ENCODE measurements at regions of chr6 and their contacts with region 1.

Region 1: DNA sequence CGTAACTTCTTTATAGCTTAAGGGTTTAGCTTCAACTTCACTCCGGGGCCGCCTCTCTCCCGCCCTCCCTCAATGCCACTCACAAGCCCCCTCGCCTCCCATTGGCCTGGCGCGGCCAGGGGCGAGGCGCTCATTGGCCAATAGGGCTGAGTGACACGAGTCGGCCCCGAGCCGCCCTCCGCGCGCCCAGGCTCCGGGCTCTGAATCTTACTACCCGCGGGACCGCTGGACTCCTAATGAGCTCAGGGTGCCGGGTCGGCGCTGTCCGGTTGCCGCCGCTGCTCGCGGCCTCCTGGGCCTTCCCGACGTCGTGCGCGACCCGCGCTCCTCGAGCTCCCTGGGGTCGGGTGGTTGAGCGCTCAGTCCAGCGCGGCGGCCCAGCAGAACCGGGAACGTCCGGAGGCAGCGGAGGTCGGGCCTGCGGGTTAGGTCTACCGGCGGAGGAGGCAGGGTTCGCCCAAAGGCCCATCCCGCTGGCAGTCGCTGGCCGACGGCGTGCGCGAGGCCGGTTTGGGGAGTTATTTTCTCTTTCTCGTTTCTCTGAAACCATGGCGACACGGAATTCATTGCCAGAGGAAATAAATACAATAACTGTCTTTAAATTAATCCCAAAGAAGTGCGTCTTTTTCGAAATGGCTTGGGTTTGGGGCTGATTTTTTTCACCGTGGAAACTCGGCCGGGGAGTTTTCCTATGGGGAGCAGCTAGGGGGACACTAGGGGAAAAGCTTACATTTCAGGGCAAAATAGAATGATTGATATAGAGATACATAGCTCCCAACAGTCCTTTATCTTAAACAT is at the start of gene SIM1:
- DNase-seq: peak; percentile 91
- H3K4me3 ChIP-seq: peak within 1 kb of the TSS; percentile 25 to 51 (median 44)
- H3K27ac ChIP-seq: no peak within 1 kb of the TSS
- H3K4me1 ChIP-seq: peaks cover 21% of the 10 kb centered on the region
- H3K27me3 ChIP-seq: peaks cover 85 to 100% of the 10 kb centered on the region in 2 experiments
- CTCF ChIP-seq: no peak
- POLR2A ChIP-seq: no peak
- total RNA-seq, gene SIM1: 0.29 and 0.39 TPM in 2 replicates

Region 2: GRCh38 chr6:99603421-99604165 is 861.5 kb before region 1 on chr6:
- CTCF ChIA-PET with region 1: no interaction called
- POLR2A ChIA-PET with region 1: no interaction called
- dilution Hi-C with region 1: no loop called
- intact Hi-C with region 1: loop called (anchors 10 kb)
- DNase-seq: peak; percentile 38
- H3K4me3 ChIP-seq: no peak overlapping the region
- H3K27ac ChIP-seq: no peak overlapping the region
- H3K4me1 ChIP-seq: no peaks in the 10 kb centered on the region
- H3K27me3 ChIP-seq: peaks cover 79 to 100% of the 10 kb centered on the region in 2 experiments
- CTCF ChIP-seq: no peak
- POLR2A ChIP-seq: no peak

Region 3: DNA sequence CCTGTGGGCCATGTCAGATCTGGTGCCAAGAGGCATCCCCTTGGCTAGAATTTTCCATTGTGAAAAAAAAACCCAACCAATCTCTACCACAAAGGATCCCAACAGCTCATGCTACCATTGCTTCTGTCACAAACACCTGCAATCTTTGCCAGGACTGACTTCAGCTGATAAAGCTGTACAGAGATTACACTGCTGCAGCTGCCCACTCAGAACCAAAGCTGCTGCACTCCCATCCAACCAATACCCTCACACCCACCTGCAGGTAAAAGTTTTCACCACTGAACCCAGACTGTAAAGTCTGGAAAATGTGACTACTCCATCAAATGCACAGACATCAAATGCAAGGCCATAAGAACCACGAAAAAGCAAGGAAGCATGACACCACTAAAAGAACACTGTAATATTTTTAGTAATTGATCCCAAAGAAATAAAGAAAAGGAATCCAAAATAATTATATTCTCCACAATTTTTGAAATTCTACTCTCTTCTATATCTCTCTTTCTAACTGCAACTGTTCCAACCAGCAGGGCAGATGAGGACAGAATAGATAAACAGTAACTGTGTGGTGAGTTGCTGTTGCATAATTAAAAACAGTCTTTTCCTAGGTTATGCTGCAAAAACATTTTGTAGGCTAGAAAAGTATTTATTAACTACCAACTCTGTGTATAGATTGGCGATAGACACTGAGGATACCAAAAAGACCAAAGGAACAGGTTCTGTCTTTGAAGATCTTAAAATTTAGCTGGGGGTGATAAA is 343.1 kb before region 1 on chr6:
- CTCF ChIA-PET with region 1: interaction called, 59 read pairs
- POLR2A ChIA-PET with region 1: no interaction called
- dilution Hi-C with region 1: loop called (anchors 25 kb)
- intact Hi-C with region 1: loop called (anchors 5 kb)
- DNase-seq: no peak
- H3K4me3 ChIP-seq: no peak overlapping the region
- H3K27ac ChIP-seq: no peak overlapping the region
- H3K4me1 ChIP-seq: no peaks in the 10 kb centered on the region
- H3K27me3 ChIP-seq: no peaks in the 10 kb centered on the region
- CTCF ChIP-seq: no peak
- POLR2A ChIP-seq: no peak

Region 4: GRCh38 chr6:100228831-100229641 is 236.1 kb before region 1 on chr6:
- CTCF ChIA-PET with region 1: interaction called, 13 read pairs
- POLR2A ChIA-PET with region 1: no interaction called
- dilution Hi-C with region 1: no loop called
- intact Hi-C with region 1: loop called (anchors 2 kb)
- DNase-seq: peak; percentile 86
- H3K4me3 ChIP-seq: peak overlapping the region; percentile 10 to 65 (median 28)
- H3K27ac ChIP-seq: peak overlapping the region; percentile 81
- H3K4me1 ChIP-seq: peaks cover 35% of the 10 kb centered on the region
- H3K27me3 ChIP-seq: no peaks in the 10 kb centered on the region
- CTCF ChIP-seq: no peak
- POLR2A ChIP-seq: peak; percentile 70

Region 5: GRCh38 chr6:100269189-100269588 is 195.9 kb before region 1 on chr6:
- CTCF ChIA-PET with region 1: interaction called, 11 read pairs
- POLR2A ChIA-PET with region 1: no interaction called
- dilution Hi-C with region 1: no loop called
- intact Hi-C with region 1: no loop called
- DNase-seq: peak; percentile 81
- H3K4me3 ChIP-seq: no peak overlapping the region
- H3K27ac ChIP-seq: peak overlapping the region; percentile 64
- H3K4me1 ChIP-seq: peaks cover 31% of the 10 kb centered on the region
- H3K27me3 ChIP-seq: no peaks in the 10 kb centered on the region
- CTCF ChIP-seq: no peak
- POLR2A ChIP-seq: peak; percentile 17

Region 6: DNA sequence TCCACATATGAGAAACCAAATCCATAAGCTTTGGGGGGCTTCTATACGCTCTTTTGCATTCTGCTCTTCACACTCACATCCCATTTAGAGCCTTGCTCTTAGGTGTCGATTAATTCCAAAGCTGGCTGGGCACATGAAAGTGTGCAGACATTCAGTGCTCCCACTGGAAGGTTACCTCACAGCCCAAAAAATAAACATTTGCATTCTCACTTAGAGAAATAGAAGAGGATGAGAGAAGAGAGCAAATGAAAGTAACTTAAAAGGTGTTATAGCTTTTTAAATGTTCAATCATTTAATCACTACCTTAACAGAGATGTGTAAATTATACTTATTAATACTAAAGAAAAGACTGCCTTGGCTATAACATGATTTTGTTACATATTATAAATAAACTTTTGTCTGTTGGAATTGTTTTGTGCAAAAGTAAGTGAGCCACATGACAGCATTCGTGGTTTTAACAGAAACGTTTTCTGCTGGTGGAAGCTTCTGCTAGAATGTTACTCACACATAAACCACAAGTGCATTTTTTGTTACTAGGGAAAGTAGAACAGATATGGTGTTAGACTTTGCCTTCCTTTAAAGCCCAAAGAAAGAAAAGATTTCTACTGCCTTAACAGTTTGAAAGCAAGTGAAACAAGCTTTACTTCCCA is 117.1 kb before region 1 on chr6:
- CTCF ChIA-PET with region 1: interaction called, 5 read pairs
- POLR2A ChIA-PET with region 1: no interaction called
- dilution Hi-C with region 1: no loop called
- intact Hi-C with region 1: loop called (anchors 5 kb)
- DNase-seq: no peak
- H3K4me3 ChIP-seq: no peak overlapping the region
- H3K27ac ChIP-seq: no peak overlapping the region
- H3K4me1 ChIP-seq: peaks cover 48% of the 10 kb centered on the region
- H3K27me3 ChIP-seq: no peaks in the 10 kb centered on the region
- CTCF ChIP-seq: no peak
- POLR2A ChIP-seq: no peak